GM10248 (cell line): ENCODE measurements at regions of chr15 and their contacts with region 1.

Region 1: DNA sequence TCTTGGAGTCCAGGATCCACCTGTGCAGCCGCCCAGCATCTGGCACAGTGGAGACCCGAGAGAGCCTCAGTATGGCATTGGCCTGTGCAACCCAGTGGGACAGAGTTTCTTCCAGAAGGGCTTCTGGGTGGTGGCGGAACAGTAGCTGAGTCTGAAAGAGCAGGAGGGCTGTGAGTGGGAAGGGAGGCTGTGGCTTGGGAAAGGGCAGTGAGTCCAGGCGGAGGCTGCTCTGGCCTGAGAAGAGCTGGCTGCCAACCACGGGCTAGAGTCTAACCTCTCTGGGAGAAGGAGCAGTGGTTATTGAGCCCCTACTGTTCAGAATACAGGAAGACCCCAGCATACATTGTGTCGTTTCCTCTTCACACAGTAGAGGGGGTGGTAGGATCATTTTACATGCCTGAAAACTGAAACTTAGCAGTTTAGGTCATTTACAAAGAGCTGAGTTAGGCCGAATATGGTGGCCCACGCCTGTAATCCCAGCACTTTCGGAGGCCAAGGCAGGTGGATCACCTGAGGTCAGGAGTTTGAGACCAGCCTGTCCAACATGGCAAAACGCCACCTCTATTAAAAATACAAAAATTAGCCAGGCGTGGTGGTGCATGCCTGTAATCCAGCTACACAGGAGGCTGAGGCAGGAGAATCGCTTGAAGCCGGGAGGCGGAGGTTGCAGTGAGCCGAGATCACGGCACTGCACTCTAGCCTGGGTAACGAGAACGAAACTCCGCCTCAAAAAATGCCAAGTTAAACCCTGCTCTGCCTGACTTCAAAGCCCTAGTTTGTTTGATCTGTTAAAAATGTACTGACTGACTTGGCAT is 3.2 kb downstream of the AEN start:
- DNase-seq: peak; percentile 70
- CTCF ChIP-seq: peak; percentile 65

Region 2: GRCh38 chr15:88337993-88338392 is 286.4 kb before region 1 on chr15:
- CTCF ChIA-PET with region 1: no interaction called
- POLR2A ChIA-PET with region 1: no interaction called
- DNase-seq: no peak
- CTCF ChIP-seq: no peak

Region 3: DNA sequence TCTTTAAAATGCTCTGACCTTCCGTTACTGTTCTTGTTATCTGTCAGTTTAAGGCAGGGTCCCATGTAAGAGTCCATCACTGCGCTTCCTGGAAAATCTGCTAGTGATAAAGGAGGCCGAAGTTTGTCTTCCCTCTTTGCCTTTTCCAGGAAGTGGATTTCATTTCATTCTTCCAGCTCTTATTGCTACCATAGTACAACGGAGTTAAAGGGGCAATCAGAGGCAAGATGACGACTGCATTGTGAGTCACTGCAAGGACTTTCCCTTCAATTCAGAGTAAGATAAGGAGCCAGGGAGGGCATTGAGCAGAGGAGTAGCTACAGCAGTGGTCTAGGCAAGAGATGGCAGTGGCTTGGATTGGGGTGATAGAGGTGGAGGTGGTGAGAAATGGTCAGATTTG is 60.7 kb before region 1 on chr15:
- CTCF ChIA-PET with region 1: no interaction called
- POLR2A ChIA-PET with region 1: no interaction called
- DNase-seq: no peak
- CTCF ChIP-seq: no peak

Region 4: DNA sequence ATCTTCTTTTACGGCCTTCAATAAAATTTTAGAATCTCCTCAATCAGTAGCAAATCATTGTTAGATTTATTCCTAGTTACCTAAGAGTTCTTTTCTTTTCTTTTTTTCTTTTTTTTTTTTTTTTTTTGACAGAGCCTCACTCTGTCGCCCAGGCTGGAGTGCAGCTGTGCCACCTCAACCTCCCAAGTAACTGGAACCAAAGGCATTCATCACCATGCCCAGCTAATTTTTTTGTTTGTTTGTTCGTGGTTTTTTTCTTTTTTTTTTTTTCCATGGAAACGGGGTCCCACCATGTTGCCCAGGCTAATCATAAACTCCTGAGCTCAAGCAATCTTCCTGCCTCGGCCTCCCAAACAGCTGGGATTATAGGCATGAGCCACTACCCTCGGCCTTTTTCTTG is 33.6 kb before region 1 on chr15:
- CTCF ChIA-PET with region 1: no interaction called
- POLR2A ChIA-PET with region 1: no interaction called
- DNase-seq: no peak
- CTCF ChIP-seq: no peak

Region 5: DNA sequence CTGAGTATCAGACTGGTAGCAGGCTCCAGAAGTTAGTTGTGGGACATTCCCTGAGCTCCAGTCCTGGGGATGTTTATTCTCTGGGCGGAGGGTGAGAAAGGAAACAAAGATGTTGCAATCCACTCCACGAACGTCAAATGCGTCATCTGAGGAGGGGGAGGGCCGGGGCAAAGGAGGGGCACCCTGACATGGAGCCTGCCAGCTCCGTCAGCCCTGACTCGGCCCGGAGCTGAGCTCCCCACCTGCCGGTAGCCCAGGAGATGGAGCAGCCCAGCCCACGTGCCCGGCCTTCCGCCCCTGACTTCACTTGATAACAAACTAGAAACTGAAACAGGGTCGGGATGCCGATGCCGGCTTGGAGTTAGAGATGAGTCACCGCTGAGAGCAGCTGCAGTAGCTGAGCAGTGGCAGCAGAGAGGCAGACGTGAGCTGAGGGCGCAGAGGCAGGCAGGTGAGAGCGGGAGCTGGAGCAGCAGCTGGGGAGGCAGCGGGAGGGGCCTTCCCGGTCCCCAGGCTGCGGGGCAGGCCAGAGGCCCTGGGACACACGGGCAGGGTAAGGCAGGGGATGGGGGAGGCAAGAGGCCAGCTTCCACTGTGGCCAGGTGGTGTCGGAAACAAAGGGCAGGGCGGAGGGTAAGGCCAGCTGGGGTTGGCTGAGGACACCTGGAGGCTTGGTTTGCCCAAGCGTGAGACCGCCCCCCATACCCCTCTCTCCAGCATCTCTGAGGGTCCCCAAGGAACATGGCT is 14.4 kb after region 1 on chr15 and contains the start of gene ISG20:
- CTCF ChIA-PET with region 1: interaction called, 73 read pairs
- POLR2A ChIA-PET with region 1: interaction called, 6 read pairs
- DNase-seq: peak; percentile 92
- CTCF ChIP-seq: peak; percentile 44

Region 6: GRCh38 chr15:88657326-88658069 is 33.1 kb after region 1 on chr15:
- CTCF ChIA-PET with region 1: interaction called, 17 read pairs
- POLR2A ChIA-PET with region 1: interaction called, 5 read pairs
- DNase-seq: peak; percentile 62
- CTCF ChIP-seq: peak; percentile 48

Region 7: DNA sequence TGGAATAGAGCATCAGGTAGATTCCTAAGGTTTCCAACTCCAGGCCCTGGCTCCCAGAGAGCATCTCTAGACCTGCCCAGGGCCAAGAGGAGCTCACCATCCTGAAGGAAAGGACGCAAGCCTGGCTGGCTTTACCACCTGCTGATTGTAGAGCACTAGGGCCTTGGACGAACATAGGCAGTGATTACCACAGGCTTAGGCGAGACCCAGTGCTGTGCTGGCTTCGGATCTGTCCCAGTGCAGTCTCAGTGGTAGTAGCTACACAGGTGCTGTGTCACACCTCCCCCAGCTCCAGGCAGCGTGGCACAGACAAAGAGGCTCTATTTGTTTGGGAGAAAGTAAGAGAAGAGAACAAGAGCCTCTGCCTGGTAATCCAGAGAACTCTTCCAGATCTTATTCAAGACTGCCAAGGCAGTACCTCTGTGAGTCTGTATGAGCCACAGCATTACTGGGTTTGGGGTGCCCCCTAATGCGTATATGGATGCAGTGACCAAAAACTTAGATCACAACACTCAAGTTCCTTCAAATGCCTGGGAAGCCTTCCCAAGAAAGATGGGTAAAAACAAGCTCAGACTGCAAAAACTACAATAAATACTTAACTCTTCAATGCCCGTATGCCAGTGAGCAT is 39.9 kb after region 1 on chr15:
- CTCF ChIA-PET with region 1: interaction called, 25 read pairs
- POLR2A ChIA-PET with region 1: no interaction called
- DNase-seq: no peak
- CTCF ChIP-seq: peak; percentile 33

Region 8: DNA sequence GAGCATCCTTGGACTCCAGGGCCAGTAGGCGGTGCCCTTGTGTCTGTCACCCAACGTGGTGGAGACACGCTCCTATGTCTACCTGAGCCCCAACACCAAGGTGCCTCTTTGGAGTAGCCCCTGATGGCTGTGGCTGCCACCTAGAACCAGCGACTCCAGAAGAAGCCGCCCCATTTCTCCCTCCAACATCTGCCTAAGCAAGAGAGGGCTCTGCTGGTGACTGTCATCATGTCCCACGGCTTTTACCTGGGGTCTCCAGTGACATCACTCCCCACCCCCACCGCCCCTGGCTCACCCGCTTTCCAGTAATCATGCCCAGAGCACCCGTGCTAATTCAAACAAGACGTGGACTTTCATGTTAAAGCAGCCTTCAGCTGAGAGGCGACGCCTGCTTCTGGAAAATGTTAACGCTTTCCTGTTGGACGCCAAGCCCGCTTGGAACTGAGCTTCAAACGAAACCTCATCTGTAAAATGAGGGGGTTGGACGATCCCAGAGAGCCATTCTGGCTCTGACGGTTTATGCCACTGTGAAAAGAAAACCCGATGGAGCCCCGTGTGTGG is 71.4 kb after region 1 on chr15:
- CTCF ChIA-PET with region 1: interaction called, 32 read pairs
- POLR2A ChIA-PET with region 1: no interaction called
- DNase-seq: no peak
- CTCF ChIP-seq: no peak

Region 9: GRCh38 chr15:88701561-88702095 is 77.3 kb after region 1 on chr15:
- CTCF ChIA-PET with region 1: interaction called, 32 read pairs
- POLR2A ChIA-PET with region 1: no interaction called
- DNase-seq: peak; percentile 65
- CTCF ChIP-seq: peak; percentile 58

Region 10: DNA sequence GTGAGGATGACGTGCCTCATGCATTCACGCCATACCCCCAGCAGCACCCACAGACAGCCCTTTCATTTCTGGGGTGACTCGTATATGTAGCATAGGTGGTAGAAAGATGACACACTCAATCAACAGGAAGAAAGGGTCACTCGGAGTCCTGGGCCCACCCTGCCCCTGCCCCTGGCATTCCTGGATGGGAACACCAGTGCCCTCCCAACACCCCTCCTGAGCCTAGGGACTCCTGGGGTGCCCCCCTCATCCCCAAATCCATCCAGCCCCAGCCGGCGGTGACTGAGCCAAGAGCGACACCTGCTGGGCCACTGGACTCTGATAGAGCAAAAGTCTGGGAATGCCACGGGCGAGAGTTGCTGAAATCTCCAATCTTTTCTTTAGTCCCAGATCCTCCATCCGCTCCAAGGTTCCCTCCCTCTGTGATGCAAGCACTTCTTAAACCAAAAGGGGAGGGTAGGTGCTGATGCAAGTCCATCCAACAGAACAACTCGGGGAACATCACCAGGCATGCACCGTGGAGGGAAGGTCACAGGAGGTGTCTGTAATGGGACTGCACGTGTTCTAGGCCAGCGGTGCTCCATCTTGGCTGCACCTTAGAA is 209.9 kb after region 1 on chr15:
- CTCF ChIA-PET with region 1: interaction called, 18 read pairs
- POLR2A ChIA-PET with region 1: no interaction called
- DNase-seq: no peak
- CTCF ChIP-seq: peak; percentile 49